ENCODE measurements at regions of chr10 and their contacts with region 1.

Region 1: GRCh38 chr10:36779234-36779846 is 346.1 kb upstream of the ANKRD30A start:
- DNase-seq: peak in 1 of 2 experiments; percentile 55
- H3K4me3 ChIP-seq: no peak overlapping the region
- H3K4me3 Mint-ChIP-seq: no peak overlapping the region
- H3K27ac Mint-ChIP-seq: no peak overlapping the region
- H3K4me1 ChIP-seq: no peaks in the 10 kb centered on the region
- H3K4me1 Mint-ChIP-seq: no peaks in the 10 kb centered on the region
- H3K27me3 ChIP-seq: no peaks in the 10 kb centered on the region
- H3K27me3 Mint-ChIP-seq: peaks cover 17% of the 10 kb centered on the region
- CTCF ChIP-seq: peak; percentile 72 to 76

Region 2: DNA sequence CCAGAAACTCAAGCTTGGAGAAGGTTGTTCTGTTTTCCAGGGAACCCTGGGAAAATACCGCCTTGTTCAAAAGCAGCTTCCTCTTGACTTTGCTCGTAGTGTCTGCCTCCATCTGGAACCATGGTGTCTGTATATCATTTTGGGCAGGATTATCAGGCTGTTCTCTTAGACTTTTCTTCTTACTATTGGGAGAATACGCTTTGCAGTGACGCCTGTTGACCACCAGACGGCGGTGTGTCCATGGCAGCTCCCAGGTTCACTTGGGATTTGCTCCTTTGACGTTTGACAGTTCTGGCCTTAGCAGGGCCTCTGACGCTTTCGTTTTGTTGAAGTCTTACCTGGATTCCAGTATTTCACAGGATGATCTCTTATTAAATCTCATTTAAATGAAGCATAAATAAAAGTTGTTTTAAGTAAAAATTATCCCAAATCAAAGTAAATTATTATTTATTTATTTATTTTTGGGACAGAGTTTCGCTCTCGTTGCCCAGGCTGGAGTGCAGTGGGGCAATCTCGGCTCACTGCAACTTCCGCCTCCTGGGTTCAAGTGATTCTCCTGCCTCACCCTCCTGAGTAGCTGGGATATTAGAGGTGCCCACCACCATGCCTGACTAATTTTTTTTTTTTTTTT is 1216.0 kb before region 1 on chr10:
- CTCF ChIA-PET with region 1: no interaction called
- POLR2A ChIA-PET with region 1: no interaction called
- intact Hi-C with region 1: loop called (anchors 5 kb)
- DNase-seq: peak; percentile 65 to 77
- H3K4me3 ChIP-seq: no peak overlapping the region
- H3K4me3 Mint-ChIP-seq: no peak overlapping the region
- H3K27ac Mint-ChIP-seq: no peak overlapping the region
- H3K4me1 ChIP-seq: no peaks in the 10 kb centered on the region
- H3K4me1 Mint-ChIP-seq: no peaks in the 10 kb centered on the region
- H3K27me3 ChIP-seq: no peaks in the 10 kb centered on the region
- H3K27me3 Mint-ChIP-seq: no peaks in the 10 kb centered on the region
- CTCF ChIP-seq: peak; percentile 99

Region 3: GRCh38 chr10:35916791-35917190 is 862.5 kb before region 1 on chr10:
- CTCF ChIA-PET with region 1: no interaction called
- POLR2A ChIA-PET with region 1: no interaction called
- intact Hi-C with region 1: loop called (anchors 5 kb)
- DNase-seq: no peak
- H3K4me3 ChIP-seq: no peak overlapping the region
- H3K4me3 Mint-ChIP-seq: no peak overlapping the region
- H3K27ac Mint-ChIP-seq: no peak overlapping the region
- H3K4me1 ChIP-seq: no peaks in the 10 kb centered on the region
- H3K4me1 Mint-ChIP-seq: no peaks in the 10 kb centered on the region
- H3K27me3 ChIP-seq: no peaks in the 10 kb centered on the region
- H3K27me3 Mint-ChIP-seq: peaks cover 14% of the 10 kb centered on the region
- CTCF ChIP-seq: peak in 1 of 2 experiments; percentile 27

Region 4: DNA sequence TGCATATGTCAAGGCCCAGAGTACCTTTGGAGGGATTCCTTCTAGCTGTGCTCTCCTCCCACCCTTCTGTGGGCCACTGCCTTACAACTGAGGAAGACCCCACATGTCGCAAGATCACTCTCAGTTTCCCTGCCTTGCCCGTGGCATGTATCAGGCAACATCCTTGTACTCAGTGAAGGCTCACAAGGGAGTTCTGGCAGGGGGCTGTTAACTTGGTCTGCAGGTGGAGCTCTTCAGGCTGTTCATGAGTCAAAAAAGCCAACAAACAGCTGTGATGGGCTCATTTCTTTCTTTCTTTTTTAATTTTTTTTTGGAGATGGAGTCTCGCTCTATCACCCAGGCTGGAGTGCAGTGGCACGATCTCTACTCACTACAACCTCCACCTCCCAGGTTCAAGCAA is 166.9 kb before region 1 on chr10:
- CTCF ChIA-PET with region 1: no interaction called
- POLR2A ChIA-PET with region 1: no interaction called
- intact Hi-C with region 1: loop called (anchors 10 kb)
- DNase-seq: no peak
- H3K4me3 ChIP-seq: no peak overlapping the region
- H3K4me3 Mint-ChIP-seq: no peak overlapping the region
- H3K27ac Mint-ChIP-seq: no peak overlapping the region
- H3K4me1 ChIP-seq: no peaks in the 10 kb centered on the region
- H3K4me1 Mint-ChIP-seq: no peaks in the 10 kb centered on the region
- H3K27me3 ChIP-seq: no peaks in the 10 kb centered on the region
- H3K27me3 Mint-ChIP-seq: peaks cover 11% of the 10 kb centered on the region
- CTCF ChIP-seq: no peak